WTC11 (cell line): ENCODE measurements at regions of chr2 and their contacts with region 1.

Region 1: DNA sequence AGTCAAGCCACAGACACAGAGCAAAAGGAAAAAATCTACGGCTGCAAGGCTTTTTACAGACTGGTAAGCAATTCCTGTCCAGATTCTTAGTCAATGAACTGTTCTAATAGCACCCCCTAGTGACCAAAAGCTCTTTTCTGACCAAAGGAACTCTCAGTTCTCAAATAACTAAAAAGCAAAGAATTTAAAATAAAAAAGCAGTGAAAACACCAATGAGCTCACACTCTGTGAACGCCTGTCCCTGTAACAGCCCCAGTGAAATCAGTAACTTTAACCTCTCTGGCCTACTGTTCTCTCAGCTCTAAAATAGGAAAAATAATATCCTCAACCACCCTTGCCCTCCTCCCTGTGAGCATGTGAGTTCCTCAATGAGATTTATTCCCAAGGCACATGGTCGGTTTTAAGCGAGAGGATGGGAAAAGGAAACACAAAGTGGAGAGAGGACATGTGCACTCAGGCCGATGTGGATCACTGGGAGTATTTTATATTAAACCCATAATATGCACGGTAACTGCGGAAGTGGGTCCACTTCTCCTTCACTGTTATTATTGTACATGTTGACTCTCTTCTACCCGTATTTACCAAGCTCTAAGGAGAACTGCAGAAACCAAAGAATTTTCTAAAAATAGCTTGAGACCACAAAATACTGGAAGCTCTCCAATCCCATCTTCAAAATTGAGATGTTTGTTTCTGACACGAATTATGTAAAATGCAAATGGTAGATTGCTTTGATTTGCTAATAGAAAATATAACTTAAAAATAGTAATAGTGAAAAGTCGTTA is 128.5 kb downstream of the STK39 start:
- DNase-seq: no peak
- ATAC-seq: peak; percentile 68
- H3K4me3 Mint-ChIP-seq: no peak overlapping the region
- H3K27ac Mint-ChIP-seq: no peak overlapping the region
- H3K4me1 Mint-ChIP-seq: peaks cover 4% of the 10 kb centered on the region; the same call in 1 of the 2 replicates
- H3K27me3 Mint-ChIP-seq: no peaks in the 10 kb centered on the region
- CTCF ChIP-seq: peak; percentile 35

Region 2: GRCh38 chr2:167264380-167264779 is 854.5 kb before region 1 on chr2:
- CTCF ChIA-PET with region 1: interaction called, 25 read pairs
- POLR2A ChIA-PET with region 1: no interaction called
- DNase-seq: peak; percentile 43
- ATAC-seq: peak; percentile 95
- H3K4me3 Mint-ChIP-seq: no peak overlapping the region
- H3K27ac Mint-ChIP-seq: no peak overlapping the region
- H3K4me1 Mint-ChIP-seq: peaks cover 20% of the 10 kb centered on the region
- H3K27me3 Mint-ChIP-seq: no peaks in the 10 kb centered on the region
- CTCF ChIP-seq: no peak

Region 3: DNA sequence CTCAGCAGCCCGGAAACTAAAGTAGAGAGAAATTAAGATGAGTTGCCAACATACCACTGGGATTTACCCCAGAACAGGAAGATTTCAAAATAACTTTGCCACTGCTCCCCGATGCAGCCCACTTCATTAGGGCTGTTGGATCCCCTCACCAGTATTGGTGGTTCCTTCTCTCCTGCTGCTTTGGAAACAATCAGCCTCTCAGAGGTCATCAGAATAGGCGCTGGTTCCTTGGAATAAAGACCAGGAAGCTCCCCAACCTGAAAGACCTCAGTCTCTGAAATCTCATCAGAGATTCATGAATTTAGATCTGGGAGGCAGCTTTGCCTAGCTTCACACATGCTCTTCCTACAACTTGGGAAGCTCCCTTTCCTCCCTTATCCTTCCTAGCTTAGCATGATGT is 204.0 kb before region 1 on chr2:
- CTCF ChIA-PET with region 1: interaction called, 10 read pairs
- POLR2A ChIA-PET with region 1: no interaction called
- DNase-seq: no peak
- ATAC-seq: peak; percentile 61
- H3K4me3 Mint-ChIP-seq: no peak overlapping the region
- H3K27ac Mint-ChIP-seq: no peak overlapping the region
- H3K4me1 Mint-ChIP-seq: peaks cover 13% of the 10 kb centered on the region
- H3K27me3 Mint-ChIP-seq: no peaks in the 10 kb centered on the region; the same call in 1 of the 2 replicates
- CTCF ChIP-seq: no peak

Region 4: DNA sequence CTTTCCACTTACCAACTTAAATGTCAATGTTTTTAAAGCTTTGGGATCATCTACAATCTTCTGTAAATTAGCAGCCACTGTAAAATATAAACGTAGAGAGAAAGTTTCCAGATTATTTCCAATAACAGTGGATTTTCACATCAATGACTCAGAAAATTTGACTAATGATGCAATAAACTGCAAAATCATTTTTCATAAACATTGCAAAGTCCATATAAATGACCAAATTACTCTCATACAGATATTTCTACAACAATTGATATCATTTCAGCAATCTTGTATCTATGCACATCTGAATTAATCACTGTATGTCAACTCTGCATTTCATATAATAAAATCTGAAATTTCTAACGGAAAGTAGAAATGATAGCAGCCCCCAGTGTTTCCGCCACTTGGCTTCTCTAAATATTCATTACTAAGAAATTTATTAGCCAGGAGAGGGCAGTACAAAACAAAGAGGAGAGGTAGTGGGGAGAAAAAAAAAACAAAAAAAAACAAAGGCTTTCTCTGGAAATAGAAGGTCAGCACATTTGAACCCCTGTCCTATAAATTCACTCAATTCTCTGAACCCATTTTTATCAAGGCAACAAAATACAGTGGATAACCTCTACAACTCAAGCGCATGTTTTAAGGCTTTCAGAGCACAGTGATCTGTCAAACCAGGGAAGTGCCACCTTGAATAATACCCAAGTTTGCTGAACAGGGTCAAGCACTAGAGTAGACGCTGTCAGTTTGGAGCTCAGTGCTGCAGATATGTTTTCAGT is 154.1 kb before region 1 on chr2:
- CTCF ChIA-PET with region 1: interaction called, 22 read pairs
- POLR2A ChIA-PET with region 1: no interaction called
- DNase-seq: no peak
- ATAC-seq: no peak
- H3K4me3 Mint-ChIP-seq: no peak overlapping the region
- H3K27ac Mint-ChIP-seq: no peak overlapping the region
- H3K4me1 Mint-ChIP-seq: peaks cover 23% of the 10 kb centered on the region
- H3K27me3 Mint-ChIP-seq: no peaks in the 10 kb centered on the region
- CTCF ChIP-seq: no peak

Region 5: GRCh38 chr2:168002021-168002553 is 116.8 kb before region 1 on chr2:
- CTCF ChIA-PET with region 1: interaction called, 10 read pairs
- POLR2A ChIA-PET with region 1: interaction called, 3 read pairs
- DNase-seq: no peak
- ATAC-seq: no peak
- H3K4me3 Mint-ChIP-seq: no peak overlapping the region
- H3K27ac Mint-ChIP-seq: no peak overlapping the region
- H3K4me1 Mint-ChIP-seq: peaks cover 11% of the 10 kb centered on the region
- H3K27me3 Mint-ChIP-seq: no peaks in the 10 kb centered on the region
- CTCF ChIP-seq: no peak

Region 6: DNA sequence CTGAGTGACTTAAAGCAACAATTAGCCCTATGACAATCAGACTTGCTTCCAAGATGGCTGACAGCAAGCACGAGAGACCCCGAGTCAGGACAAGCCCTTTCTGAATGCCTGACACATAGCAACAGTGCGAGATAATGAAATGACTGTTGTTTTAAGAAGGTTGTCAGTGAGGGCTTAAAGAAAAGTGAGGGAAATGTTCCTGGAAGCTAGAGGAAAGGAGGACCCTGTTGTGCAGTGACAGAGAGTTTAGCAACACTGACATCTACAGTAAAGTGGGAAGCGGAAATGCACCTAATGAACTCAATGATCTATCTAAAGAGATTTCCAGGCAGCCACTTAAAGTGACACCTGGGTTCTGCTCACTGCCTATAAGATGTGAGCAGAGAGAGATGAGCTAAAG is 34.6 kb before region 1 on chr2:
- CTCF ChIA-PET with region 1: no interaction called
- POLR2A ChIA-PET with region 1: no interaction called
- DNase-seq: no peak
- ATAC-seq: no peak; the same call in 1 of the 2 replicates
- H3K4me3 Mint-ChIP-seq: no peak overlapping the region
- H3K27ac Mint-ChIP-seq: 0 out of 2 replicates have a peak overlapping the region, but pooled peaks have one; percentile 40
- H3K4me1 Mint-ChIP-seq: peaks cover 6% of the 10 kb centered on the region
- H3K27me3 Mint-ChIP-seq: no peaks in the 10 kb centered on the region
- CTCF ChIP-seq: no peak

Region 7: DNA sequence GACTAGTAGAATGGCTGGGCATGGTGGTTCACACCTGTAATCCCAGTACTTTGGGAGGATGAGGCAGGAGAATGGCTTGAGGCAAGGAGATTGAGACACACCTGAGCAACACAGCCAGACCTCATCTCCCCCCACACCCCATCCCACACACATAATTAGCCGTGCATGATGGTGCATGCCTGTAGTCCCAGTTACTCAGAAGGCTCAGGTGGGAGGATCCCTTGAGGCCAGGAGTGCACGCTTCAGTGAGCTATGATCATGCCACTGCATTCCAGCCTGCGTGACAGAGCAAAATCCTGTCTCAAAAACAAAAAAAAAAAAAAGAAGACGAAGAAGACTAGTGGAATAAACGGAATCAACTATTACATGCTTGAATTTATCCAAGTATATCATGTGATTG is 21.5 kb before region 1 on chr2:
- CTCF ChIA-PET with region 1: interaction called, 11 read pairs
- POLR2A ChIA-PET with region 1: no interaction called
- DNase-seq: no peak
- ATAC-seq: no peak
- H3K4me3 Mint-ChIP-seq: no peak overlapping the region
- H3K27ac Mint-ChIP-seq: no peak overlapping the region
- H3K4me1 Mint-ChIP-seq: no peaks in the 10 kb centered on the region
- H3K27me3 Mint-ChIP-seq: no peaks in the 10 kb centered on the region
- CTCF ChIP-seq: no peak

Region 8: DNA sequence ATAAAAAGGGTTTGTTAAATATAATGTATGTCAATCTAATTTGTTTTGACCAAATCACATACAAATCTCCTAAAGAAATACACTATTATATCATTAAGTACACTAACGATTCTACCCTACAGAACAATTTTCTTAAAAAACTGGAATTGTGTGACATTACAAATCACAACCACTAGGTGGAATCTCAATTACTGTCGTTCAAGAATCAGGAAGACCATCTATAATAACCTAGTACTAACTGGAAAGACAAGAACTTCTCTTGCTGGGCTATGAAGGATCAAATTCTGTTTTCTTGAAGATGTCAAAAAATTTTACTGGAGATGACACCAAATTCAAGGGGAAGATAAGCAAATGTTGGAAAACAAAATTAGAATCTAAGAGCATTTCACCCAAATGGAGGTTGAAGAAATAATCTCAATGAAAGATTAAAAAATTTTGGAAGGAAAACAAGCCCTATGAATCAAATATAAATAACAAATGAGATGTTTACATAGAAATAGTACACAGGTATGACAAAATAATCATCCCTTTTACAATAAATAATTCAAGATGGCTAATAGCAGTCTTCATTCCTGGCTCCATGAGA is 17.6 kb after region 1 on chr2:
- CTCF ChIA-PET with region 1: interaction called, 10 read pairs
- POLR2A ChIA-PET with region 1: no interaction called
- DNase-seq: no peak
- ATAC-seq: 0 out of 2 replicates have a peak, but pooled peaks have one; percentile 14
- H3K4me3 Mint-ChIP-seq: no peak overlapping the region
- H3K27ac Mint-ChIP-seq: no peak overlapping the region; the same call in 1 of the 2 replicates
- H3K4me1 Mint-ChIP-seq: peaks cover 37% of the 10 kb centered on the region
- H3K27me3 Mint-ChIP-seq: no peaks in the 10 kb centered on the region
- CTCF ChIP-seq: no peak; the same call in 1 of the 2 replicates